ENCODE measurements at regions of chr16 and their contacts with region 1.

Region 1: DNA sequence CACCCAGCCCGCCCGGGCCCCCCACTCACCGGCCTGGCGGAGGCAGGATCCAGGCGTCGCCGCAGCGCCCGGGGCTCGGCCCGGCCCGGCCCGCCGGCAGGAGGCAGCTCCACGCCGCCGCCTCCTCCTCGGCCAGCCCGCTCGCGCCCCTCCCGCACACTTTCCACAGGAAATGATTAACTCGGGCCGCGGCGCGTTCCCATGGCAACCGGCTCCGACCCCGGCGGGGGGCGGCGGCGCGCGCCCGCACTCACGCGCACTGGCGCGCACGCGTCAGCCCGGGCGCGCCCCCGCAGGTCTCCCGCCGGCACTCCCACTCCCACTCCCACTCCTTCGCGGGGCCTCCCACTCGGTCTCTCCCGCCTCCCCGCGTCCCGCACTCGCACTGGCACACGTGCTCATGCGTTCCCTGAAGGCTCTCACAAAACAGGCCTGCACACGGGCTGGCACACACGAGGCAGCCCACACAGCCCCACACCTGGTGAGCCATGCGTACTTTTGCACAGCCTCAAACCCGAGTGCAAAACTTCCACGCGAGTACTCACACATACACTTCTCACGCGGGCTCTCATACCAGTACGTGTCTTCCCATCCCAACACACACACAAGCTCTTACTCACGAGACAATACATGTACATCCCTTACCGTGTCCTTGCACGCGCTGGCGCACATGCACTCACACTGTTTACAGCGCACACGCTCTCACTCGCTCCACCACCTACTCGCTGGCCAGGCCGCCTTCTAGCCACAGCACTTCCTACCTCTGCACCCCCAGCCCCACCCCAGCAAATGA is at the start of gene KIFC3:
- DNase-seq: no peak
- H3K4me3 ChIP-seq: peak within 1 kb of the TSS; percentile 70 to 80 (median 73)
- H3K27ac ChIP-seq: peak within 1 kb of the TSS; percentile 83 to 90 (median 88)
- H3K4me1 ChIP-seq: peaks cover 59 to 72% (median 68%) of the 10 kb centered on the region in 4 donors
- H3K27me3 ChIP-seq: no peaks in the 10 kb centered on the region
- CTCF ChIP-seq: peak in 2 of 3 experiments; percentile 28 to 43
- EP300 ChIP-seq: no peak
- POLR2A ChIP-seq: no peak
- total RNA-seq, gene KIFC3: 28.2 to 76.8 (median 46.6) TPM

Region 2: DNA sequence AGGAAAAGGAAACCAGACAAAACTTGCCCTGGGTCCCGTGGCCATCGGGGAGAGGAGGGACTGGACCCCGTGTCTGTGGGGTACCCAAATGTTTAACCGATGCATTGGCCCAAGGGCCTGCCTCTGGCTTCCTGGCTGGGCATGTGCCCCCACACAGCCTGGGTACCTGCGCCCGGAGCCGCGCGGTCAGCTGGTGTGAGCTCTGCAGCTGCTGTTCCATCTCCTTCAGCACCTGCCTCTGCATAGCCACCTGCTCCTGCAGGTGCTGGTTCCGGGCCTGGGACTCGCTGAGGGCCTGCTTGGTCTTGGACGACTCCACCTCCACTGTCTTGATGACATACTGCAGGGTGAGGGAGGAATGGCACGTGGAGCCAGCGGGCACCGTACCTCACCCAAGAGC is 32.2 kb before region 1 on chr16:
- intact Hi-C with region 1: no loop called
- DNase-seq: no peak
- H3K4me3 ChIP-seq: no peak overlapping the region
- H3K27ac ChIP-seq: no peak overlapping the region
- H3K4me1 ChIP-seq: peaks cover 0 to 5% (median 0%) of the 10 kb centered on the region in 4 donors
- H3K27me3 ChIP-seq: no peaks in the 10 kb centered on the region
- CTCF ChIP-seq: no peak
- EP300 ChIP-seq: no peak
- POLR2A ChIP-seq: no peak

Region 3: GRCh38 chr16:57863434-57864160 is 61.1 kb after region 1 on chr16:
- intact Hi-C with region 1: loop called (anchors 5 kb)
- DNase-seq: no peak
- H3K4me3 ChIP-seq: no peak overlapping the region
- H3K27ac ChIP-seq: no peak overlapping the region
- H3K4me1 ChIP-seq: peaks cover 5 to 12% (median 9%) of the 10 kb centered on the region in 4 donors
- H3K27me3 ChIP-seq: no peaks in the 10 kb centered on the region
- CTCF ChIP-seq: peak; percentile 57 to 72 (median 69)
- EP300 ChIP-seq: no peak
- POLR2A ChIP-seq: no peak

Region 4: GRCh38 chr16:58363746-58364393 is 561.3 kb after region 1 on chr16:
- intact Hi-C with region 1: no loop called
- DNase-seq: no peak
- H3K4me3 ChIP-seq: no peak overlapping the region
- H3K27ac ChIP-seq: no peak overlapping the region
- H3K4me1 ChIP-seq: no peaks in the 10 kb centered on the region
- H3K27me3 ChIP-seq: no peaks in the 10 kb centered on the region
- CTCF ChIP-seq: no peak
- EP300 ChIP-seq: no peak
- POLR2A ChIP-seq: no peak

Measured in esophagus muscularis mucosa (tissue), 4 donors.